ENCODE measurements at regions of chr18 and their contacts with region 1.

Region 1: DNA sequence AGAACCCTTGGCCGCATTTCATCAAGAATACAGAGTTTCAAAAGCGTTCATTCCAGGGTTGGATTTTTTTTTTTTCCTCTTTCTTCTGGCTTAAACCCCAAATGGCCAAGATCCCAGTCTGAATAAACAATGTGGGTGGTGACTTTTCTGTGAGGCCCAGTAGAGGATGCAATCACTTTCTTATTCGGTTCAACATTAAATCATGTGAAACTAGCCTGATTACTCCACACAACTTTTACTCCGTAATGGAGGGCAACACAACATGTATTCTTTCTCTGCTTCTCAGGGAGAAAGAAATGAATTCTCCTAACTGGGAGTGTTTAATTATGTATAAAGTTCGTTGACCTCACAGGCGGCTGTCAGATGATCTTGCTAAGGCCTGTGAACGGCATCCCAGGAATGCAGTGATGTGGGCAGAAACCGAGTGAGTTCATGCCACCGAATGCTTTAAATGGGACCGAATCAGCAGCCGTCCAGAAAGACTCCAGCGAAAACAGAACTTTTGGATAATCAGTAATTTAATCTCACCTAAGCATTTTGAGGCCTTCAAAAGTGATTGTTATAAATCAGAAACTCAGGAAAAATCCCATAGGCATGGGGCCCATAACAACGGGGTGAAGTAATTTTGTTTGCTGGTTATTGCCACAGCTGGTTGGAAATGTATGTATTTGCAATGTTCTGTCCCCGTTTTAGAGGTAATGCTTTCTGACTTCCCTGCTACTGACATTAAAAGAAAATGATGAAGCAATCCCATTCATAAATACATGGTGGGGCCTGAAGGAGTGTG is 81.5 kb downstream of the BCL2 start:
- DNase-seq: no peak
- H3K4me3 ChIP-seq: no peak overlapping the region
- H3K4me3 Mint-ChIP-seq: no peak overlapping the region
- H3K27ac ChIP-seq: peak overlapping the region in 1 of 2 donors; percentile 100
- H3K27ac Mint-ChIP-seq: peak overlapping the region; percentile 99 to 100 (median 99)
- H3K4me1 ChIP-seq: peaks cover 43 to 46% of the 10 kb centered on the region in 2 donors
- H3K4me1 Mint-ChIP-seq: peaks cover 45% of the 10 kb centered on the region
- H3K27me3 ChIP-seq: no peaks in the 10 kb centered on the region
- H3K27me3 Mint-ChIP-seq: no peaks in the 10 kb centered on the region
- CTCF ChIP-seq: no peak

Region 2: DNA sequence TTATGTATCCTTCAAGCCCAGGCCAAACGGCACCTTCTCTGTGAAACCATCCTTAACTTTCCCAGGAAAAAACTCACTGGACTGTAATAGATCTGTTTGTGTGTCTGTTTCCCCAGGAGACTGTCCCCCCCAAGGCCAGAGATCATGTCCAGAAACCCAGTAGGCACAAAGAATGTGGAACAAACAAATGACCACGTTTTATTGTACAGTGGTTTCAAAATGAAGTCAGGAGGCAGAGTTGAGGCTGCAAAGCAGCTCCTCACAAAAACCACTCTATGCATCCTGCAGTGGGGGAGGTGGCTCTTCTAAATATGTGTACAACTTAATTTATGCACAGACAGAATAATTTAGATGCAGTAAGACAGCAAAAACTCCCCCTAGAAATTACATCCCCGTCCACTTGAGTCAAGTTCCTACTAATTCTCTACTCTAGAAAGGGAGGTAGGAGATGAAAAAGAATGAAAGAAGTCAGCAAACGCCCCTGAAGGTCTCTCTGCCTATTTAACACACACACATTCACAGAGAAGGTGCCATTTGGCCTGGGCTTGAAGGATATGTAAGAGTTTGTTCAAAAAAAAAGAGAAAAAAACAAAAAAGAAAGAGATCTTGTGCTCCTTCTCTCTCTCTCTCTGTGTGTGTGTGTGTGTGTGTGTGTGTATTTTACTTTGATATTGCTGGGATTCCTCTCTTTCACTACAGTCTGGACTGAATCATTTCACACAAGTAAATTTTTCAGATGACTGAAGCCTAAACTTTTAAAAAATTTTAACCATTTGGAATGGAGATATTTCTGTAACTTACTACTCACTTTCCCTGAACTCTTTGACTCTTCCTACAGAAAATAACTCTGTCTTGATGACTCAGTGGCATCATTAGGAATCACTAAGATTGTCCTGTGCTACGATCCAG is 62.0 kb after region 1 on chr18:
- intact Hi-C with region 1: loop called (anchors 5 to 10 kb)
- DNase-seq: no peak
- H3K4me3 ChIP-seq: no peak overlapping the region
- H3K4me3 Mint-ChIP-seq: no peak overlapping the region
- H3K27ac ChIP-seq: no peak overlapping the region
- H3K27ac Mint-ChIP-seq: peak overlapping the region in 4 of 7 donors; percentile 7 to 84 (median 51)
- H3K4me1 ChIP-seq: peaks cover 29 to 33% of the 10 kb centered on the region in 2 donors
- H3K4me1 Mint-ChIP-seq: peaks cover 38% of the 10 kb centered on the region
- H3K27me3 ChIP-seq: no peaks in the 10 kb centered on the region
- H3K27me3 Mint-ChIP-seq: peaks cover 0 to 1% (median 0%) of the 10 kb centered on the region in 3 donors
- CTCF ChIP-seq: no peak

Region 3: GRCh38 chr18:63590373-63590772 is 352.3 kb after region 1 on chr18:
- intact Hi-C with region 1: no loop called
- DNase-seq: peak; percentile 59 to 82 (median 77)
- H3K4me3 ChIP-seq: no peak overlapping the region
- H3K4me3 Mint-ChIP-seq: peak overlapping the region; percentile 38 to 53
- H3K27ac ChIP-seq: peak overlapping the region in 1 of 2 donors; percentile 38
- H3K27ac Mint-ChIP-seq: peak overlapping the region; percentile 50 to 91 (median 83)
- H3K4me1 ChIP-seq: peaks cover 34 to 35% of the 10 kb centered on the region in 2 donors
- H3K4me1 Mint-ChIP-seq: peaks cover 35% of the 10 kb centered on the region
- H3K27me3 ChIP-seq: no peaks in the 10 kb centered on the region
- H3K27me3 Mint-ChIP-seq: peaks cover 0 to 1% (median 0%) of the 10 kb centered on the region in 3 donors
- CTCF ChIP-seq: no peak